Activated CD4-positive, alpha-beta T cell treated with anti-CD3 and anti-CD28 coated beads for 36 hours (primary cell): ENCODE measurements at regions of chr16 and their contacts with region 1.

Region 1: DNA sequence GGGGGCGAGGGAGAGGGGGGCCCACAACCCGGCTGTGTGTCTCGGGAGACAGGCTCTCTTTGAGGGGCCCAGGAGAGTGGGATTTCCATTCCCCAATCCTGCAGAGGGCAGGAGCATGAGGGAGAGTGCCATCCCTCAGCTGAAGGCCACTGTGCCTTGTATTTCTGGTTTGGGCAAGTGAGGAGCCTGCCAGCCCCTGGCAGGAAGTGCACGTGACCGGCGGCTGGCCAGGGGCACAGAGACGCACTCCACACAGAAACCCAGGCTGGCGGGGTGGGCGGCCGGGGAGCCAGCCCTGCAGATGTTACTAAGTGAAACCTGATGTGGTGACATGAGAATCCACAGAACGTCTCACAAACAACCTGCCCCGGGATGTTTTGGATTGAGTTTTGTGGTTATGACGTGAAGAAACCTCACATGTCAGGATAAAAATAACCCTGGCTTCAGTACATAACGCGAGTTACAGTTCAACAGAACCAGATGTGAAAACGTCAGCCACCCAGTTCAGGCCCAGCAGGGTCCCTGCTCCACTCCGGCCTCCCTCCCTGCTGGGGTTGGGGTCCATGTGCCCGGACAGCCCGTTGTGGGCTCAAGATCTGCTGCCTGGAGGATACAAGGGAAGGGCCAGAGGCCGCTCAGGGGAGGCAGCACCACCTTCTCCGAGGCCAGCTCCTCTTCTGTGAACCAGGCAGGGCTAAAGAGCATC is 51.7 kb upstream of the MTSS2 start:
- DNase-seq: peak; percentile 91
- ATAC-seq: peak; percentile 88
- H3K4me3 Mint-ChIP-seq: peak overlapping the region; percentile 55
- H3K27ac Mint-ChIP-seq: peak overlapping the region; percentile 97
- H3K4me1 Mint-ChIP-seq: peaks cover 60% of the 10 kb centered on the region
- H3K27me3 Mint-ChIP-seq: no peaks in the 10 kb centered on the region

Region 2: DNA sequence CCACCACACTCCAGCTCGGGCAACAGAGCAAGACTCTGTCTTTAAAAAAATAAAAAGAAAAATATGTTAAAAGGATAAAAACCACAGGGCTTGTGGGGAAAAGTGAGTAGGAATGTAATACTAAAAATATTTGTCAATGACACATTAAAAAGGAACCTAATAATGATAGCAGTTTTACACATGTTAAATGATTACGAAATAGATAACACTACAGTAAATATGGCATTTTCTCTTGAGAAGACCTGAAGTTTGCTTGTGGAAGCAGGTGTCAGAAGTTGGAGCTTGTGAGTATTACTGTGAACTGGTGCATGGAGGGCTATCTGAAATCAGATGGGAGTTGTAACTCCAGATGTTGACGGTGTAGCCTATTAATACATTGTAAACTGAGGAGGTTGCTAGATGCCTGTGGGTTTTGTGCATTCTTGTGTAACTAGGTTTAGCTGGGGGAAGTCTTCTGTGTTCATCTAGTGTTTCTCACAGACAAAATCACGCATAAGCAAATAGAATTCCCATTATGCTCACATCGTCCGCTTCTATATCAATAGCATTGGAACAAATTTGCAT is 830.6 kb before region 1 on chr16:
- CTCF ChIA-PET with region 1: no interaction called
- POLR2A ChIA-PET with region 1: no interaction called
- intact Hi-C with region 1: no loop called
- DNase-seq: no peak
- ATAC-seq: no peak
- H3K4me3 Mint-ChIP-seq: no peak overlapping the region
- H3K27ac Mint-ChIP-seq: no peak overlapping the region
- H3K4me1 Mint-ChIP-seq: no peaks in the 10 kb centered on the region
- H3K27me3 Mint-ChIP-seq: no peaks in the 10 kb centered on the region

Region 3: DNA sequence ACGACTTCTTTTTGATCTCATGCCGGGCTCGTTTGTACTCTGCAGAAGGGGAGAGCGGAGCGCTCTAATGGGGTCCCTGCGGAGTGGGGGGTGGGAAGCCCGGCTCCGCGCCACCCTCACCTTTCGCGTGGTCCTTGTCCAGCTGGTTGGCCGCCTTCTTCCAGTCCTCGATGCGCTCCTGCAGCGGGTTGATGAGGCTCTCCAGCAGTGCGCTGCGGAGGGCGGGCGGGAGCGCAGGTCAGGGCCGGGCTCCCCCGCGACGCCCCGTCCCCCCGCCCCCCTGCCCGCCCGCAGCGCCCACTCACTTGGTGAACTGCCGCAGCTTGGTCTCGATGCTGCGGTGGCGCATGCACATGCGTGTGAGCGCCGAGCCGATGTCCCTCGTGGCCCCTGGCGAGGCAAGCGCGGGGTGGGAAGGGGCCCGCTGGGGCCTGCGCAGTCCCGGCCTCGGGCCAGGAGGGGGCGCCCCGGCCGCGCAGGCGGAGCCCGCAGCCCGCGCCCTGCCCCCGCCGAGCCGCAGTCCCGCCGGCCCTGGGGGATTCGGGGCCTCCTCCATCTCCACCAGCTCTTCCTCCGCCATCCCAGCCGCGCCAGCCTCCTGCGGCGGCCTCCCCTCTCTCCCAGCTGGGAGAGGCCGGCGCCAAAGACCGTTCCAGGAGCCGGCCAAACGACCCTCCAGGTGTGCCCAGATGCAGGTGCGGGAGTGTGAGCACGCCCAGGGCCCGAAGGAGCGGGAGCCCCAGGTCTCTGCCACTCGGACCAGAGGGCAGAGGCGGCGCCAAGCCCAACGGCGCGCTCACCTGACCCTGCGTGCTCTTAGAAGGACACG is 57.6 kb before region 1 on chr16:
- CTCF ChIA-PET with region 1: no interaction called
- POLR2A ChIA-PET with region 1: no interaction called
- intact Hi-C with region 1: loop called (anchors 1 to 10 kb)
- DNase-seq: peak; percentile 47
- ATAC-seq: peak; percentile 67
- H3K4me3 Mint-ChIP-seq: no peak overlapping the region
- H3K27ac Mint-ChIP-seq: no peak overlapping the region
- H3K4me1 Mint-ChIP-seq: no peaks in the 10 kb centered on the region
- H3K27me3 Mint-ChIP-seq: peaks cover 5% of the 10 kb centered on the region

Region 4: GRCh38 chr16:70685938-70686375 is 51.6 kb before region 1 on chr16 and contains the start of gene MTSS2:
- CTCF ChIA-PET with region 1: interaction called, 5 read pairs
- POLR2A ChIA-PET with region 1: no interaction called
- intact Hi-C with region 1: loop called in 1 of 2 experiments (anchors 10 kb)
- DNase-seq: peak; percentile 57
- ATAC-seq: peak; percentile 54
- H3K4me3 Mint-ChIP-seq: peak within 1 kb of the TSS; percentile 55
- H3K27ac Mint-ChIP-seq: no peak within 1 kb of the TSS
- H3K4me1 Mint-ChIP-seq: no peaks in the 10 kb centered on the region
- H3K27me3 Mint-ChIP-seq: peaks cover 11% of the 10 kb centered on the region
- total RNA-seq, gene MTSS2: 1.6 to 3.5 TPM